GM13977 (cell line): ENCODE measurements at regions of chr18 and their contacts with region 1.

Region 1: DNA sequence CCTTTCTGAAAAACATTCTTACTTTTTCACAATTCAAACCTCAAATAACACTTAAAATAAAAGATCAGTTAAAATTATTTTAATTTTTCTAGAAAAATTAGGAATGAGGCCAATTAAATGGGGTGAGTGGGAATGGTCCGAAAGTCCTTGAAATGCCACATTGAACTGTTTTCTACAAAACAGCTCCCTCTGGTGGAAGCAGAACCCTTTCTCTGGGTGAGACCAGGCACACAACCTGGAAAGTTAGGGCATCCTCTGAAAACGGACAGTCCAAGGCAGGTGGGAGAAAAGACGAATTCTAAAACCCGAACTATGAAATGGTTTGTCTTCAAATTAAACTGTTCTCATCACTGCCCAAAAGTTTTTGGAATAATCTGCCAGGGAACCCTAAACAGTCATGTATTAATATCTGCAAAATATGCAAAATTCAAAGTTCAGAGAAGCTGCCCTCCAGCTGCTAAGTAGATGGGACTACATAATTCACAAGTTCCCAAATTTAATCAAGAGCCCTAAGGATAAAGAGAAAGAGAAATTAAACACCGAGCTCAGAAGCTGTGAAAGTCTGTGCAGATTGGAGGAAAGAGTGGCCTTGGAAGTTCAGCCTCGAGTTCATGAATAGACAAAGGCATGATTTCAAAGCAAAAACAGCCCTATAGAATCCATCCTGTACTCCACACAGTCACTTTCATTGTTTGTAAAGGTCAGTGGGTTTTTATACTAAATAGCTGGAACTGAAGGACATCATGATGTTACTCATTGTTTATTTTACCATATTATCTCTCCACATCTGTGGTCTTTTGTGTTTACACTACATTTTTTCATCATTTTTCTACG is 108.3 kb downstream of the PIEZO2 start:
- DNase-seq: peak; percentile 50
- CTCF ChIP-seq: peak; percentile 75

Region 2: DNA sequence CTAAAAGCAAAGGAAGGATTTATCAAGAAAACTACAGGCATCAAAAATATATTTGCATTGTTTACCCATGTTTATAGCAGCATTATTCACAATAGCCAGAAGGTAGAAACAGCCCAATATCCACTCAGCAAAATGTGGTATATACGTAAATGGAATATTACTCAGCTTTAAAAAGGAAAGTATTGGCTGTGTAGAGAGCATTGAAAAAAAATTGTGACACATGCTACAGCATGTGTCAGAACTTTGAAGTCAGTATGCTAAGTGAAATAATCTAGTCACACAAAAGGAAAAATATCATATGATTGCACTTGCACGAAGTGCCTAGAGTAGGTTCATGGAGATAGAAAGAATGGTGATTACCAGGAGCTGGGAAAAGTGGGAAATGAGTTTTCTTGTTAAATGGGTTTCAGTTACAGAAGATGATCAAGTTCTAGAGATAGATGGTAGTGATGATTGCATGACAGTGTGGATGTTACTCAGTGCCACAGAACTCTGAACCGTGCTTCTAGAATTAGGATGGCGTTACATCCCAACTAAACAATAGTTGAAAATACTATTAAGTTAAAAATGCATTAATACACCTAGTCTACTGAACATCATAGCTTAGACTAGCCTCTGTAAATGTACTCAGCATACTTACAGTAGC is 1884.3 kb before region 1 on chr18:
- in situ Hi-C with region 1: no loop called
- DNase-seq: no peak
- CTCF ChIP-seq: no peak

Region 3: DNA sequence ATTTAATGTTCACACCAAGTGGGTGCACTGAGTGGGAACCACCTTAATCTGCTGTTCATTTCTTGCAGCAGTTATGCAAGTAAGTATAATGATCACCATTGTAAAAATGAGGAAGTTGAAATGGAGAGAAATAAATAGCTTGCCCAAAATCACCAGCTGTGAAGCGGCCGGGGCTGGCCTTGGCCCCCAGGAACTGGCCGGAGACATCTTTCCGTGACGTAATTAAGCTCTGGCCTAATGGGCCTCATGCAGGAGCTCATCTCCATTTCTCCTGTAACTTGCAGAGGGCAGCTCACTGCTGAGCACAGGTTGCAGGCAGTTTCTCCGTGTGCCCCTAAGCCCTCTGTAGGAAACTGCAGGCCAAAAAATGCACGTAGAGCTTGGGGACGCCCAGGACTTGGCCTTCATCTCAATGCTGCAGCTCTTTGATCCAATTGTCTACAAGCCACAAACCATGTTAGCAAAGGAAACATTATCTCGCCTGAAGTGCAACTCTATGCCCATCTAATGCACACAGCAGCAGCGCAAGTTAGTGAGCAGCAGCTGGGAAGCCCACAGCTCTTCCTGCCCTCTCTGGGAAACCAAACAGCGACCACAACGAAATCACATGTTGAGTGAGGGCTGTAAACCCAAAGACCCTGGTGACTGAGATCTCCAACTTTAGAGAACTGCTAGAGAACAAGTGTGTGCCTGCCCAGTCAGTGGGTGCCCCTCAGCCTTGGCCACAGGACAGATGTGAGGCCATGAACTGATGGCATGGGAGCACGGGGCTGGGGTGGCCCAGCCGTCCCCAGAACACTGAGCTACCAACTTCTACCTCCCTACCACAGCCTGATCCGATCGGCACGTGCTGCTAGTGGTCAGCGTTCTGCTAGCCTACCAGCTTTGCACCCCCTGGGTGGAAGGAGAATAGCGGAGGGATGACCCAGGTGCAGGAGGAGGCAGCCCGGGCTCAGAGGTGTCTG is 557.8 kb before region 1 on chr18:
- in situ Hi-C with region 1: no loop called
- DNase-seq: peak; percentile 77
- CTCF ChIP-seq: no peak

Region 4: GRCh38 chr18:10851824-10852319 is 189.2 kb before region 1 on chr18:
- in situ Hi-C with region 1: loop called (anchors 10 kb)
- DNase-seq: peak; percentile 54
- CTCF ChIP-seq: peak; percentile 58

Region 5: GRCh38 chr18:11154368-11154989 is 113.4 kb after region 1 on chr18:
- in situ Hi-C with region 1: no loop called
- DNase-seq: peak; percentile 57
- CTCF ChIP-seq: peak; percentile 48

Region 6: GRCh38 chr18:11324956-11325873 is 284.2 kb after region 1 on chr18:
- in situ Hi-C with region 1: no loop called
- DNase-seq: peak; percentile 55
- CTCF ChIP-seq: no peak